ENCODE measurements at regions of chr17 and their contacts with region 1.

Region 1: DNA sequence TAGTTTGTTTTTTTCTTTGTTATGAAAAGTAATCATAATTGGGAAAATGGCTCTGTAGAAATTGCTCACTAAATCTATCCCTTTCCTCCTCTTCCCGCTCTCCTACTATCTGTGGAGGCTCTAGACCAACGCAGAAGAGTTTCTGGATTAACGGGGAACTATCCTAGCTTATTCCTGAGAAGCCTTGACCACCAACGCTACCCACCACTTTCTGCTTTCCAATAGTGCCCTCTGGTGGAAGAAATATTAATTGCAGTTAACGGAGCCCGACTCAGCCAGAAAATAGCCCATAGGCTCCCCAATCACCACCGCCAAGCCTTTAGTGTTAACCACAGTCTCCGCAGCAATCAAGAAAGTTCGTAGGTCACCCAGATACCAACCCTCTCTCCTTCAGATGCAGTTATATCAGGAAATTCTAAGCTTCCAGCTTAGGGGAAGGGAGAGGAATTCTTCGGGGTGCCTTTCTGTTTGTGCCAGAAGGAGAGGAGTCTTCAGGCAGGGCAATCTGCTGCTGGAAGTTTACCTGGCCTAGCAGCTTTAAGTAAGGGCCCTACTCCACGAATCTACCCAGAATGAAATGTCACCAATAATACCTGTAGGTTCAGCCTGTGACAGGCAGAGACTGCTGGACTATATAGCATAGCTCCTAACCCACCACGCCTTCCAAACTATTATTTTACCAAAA is 23.0 kb upstream of the NSRP1 start:
- DNase-seq: peak; percentile 48
- H3K4me3 Mint-ChIP-seq: no peak overlapping the region
- H3K27ac Mint-ChIP-seq: no peak overlapping the region
- H3K4me1 Mint-ChIP-seq: peaks cover 4% of the 10 kb centered on the region
- H3K27me3 Mint-ChIP-seq: peaks cover 41% of the 10 kb centered on the region

Region 2: DNA sequence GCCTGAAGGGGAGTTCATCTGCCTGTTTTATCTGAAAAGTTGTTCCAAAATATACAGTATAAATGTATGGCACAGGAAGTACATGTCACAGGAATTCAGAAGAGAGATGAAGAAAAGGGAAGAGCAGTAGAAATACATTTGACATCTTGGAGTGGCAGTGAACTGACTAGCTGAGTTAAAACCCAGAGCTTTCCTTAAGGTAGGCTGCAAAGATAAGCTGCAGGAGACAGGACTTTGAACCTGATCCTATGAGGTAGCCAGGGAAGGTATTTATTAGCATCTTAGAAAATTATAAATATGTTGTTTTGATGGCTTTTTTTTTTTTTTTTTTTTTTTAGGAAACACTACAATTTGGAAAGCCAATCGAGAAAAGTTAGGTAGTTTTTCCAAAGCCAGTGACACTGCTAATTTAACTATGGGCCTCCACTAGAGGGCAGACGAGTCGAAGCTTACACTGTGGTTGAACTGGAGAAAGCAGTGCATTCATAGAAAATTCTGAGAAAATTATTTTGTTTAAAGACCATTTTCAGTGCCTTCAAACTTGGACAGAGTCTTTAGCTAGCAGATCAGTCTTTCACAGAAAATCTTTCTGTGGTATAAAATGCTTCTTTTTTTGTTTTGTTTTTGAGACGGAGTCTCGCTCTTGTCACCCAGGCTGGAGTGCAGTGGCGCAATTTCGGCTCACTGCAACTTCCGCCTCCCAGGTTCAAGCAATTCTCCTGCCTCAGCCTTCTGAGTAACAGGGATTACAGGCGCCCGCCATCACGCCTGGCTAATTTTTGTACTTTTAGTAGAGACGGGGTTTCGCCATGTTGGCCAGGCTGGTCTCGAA is 285.9 kb before region 1 on chr17:
- CTCF ChIA-PET with region 1: interaction called, 12 read pairs
- DNase-seq: peak; percentile 83
- H3K4me3 Mint-ChIP-seq: no peak overlapping the region
- H3K27ac Mint-ChIP-seq: no peak overlapping the region
- H3K4me1 Mint-ChIP-seq: peaks cover 26% of the 10 kb centered on the region
- H3K27me3 Mint-ChIP-seq: no peaks in the 10 kb centered on the region

Region 3: DNA sequence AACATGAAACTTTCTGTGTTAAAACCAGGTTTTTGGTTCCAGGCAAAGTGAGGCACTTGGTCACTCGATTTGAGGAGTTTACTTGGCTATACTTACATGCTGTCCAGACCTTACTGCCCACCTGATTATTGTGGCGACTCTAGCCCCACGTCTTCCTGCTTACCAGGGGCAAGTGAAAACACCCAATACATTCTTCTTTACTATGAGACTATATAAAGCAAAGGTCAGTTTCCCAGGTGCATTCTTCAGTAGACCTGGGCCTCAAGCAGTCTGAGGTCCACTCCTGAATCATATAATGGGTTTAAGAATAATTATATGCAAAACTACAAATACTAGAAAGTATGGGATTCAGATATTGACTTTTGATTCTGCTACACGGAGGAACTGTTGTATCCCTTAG is 65.9 kb before region 1 on chr17:
- CTCF ChIA-PET with region 1: interaction called, 20 read pairs
- DNase-seq: no peak
- H3K4me3 Mint-ChIP-seq: no peak overlapping the region
- H3K27ac Mint-ChIP-seq: no peak overlapping the region
- H3K4me1 Mint-ChIP-seq: no peaks in the 10 kb centered on the region
- H3K27me3 Mint-ChIP-seq: peaks cover 4% of the 10 kb centered on the region

Region 4: GRCh38 chr17:30074730-30075129 is 18.9 kb before region 1 on chr17:
- CTCF ChIA-PET with region 1: interaction called, 12 read pairs
- DNase-seq: no peak
- H3K4me3 Mint-ChIP-seq: no peak overlapping the region
- H3K27ac Mint-ChIP-seq: no peak overlapping the region
- H3K4me1 Mint-ChIP-seq: no peaks in the 10 kb centered on the region
- H3K27me3 Mint-ChIP-seq: peaks cover 14% of the 10 kb centered on the region

Region 5: DNA sequence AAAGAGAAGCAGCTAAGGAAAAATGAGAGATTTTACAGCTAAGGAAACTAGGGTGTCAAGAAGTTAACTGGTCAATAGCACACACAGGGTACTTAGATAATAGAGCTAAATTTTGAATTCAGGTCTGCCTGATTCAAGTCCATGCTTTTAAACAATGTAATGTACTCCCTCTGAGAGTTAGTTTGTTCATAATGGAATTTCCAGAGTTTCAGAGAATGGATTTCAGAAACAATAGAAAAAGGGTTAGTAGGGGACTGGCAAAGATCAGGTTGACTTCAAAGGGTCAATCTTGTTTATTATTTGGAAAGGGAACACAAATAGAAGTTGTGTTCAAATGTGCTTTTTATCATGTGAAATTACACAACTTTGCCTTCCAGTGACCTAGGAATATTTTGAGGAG is 40.9 kb after region 1 on chr17:
- CTCF ChIA-PET with region 1: no interaction called
- DNase-seq: no peak
- H3K4me3 Mint-ChIP-seq: no peak overlapping the region
- H3K27ac Mint-ChIP-seq: no peak overlapping the region
- H3K4me1 Mint-ChIP-seq: peaks cover 2% of the 10 kb centered on the region
- H3K27me3 Mint-ChIP-seq: no peaks in the 10 kb centered on the region

Measured in activated naive CD4-positive, alpha-beta T cell treated with anti-CD3 and anti-CD28 coated beads, Interleukin-2, amount 10 ng/mL, durations not matched to agents 7 days and 5 days (primary cell).